Right cardiac atrium (tissue), 5 donors: ENCODE measurements at regions of chr16 and their contacts with region 1.

Region 1: DNA sequence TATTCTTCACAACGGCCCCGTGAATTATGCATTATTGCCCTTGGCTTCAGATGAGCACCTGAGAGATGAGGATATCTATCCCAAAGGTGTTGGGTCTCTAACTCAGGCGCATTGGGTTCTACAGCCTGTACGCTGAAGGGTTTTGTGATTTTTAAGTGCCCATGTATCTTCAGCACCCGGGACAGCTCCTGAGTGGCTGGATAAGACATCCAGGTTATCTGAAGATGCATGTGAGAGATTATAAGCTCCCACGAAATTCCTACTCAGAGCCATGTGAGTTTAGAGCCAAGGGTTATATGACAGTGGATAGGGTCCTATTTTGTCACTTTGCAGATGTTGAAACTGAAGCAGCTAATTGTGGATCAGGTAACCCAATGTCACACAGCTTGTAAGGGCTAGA is 612.3 kb upstream of the EEF2KMT start:
- DNase-seq: no peak
- ATAC-seq: no peak
- H3K4me3 ChIP-seq: no peak overlapping the region
- H3K27ac ChIP-seq: no peak overlapping the region
- H3K4me1 ChIP-seq: no peaks in the 10 kb centered on the region
- H3K27me3 ChIP-seq: no peaks in the 10 kb centered on the region

Region 2: GRCh38 chr16:5321930-5322329 is 388.0 kb before region 1 on chr16:
- intact Hi-C with region 1: no loop called
- DNase-seq: no peak
- ATAC-seq: no peak
- H3K4me3 ChIP-seq: no peak overlapping the region
- H3K27ac ChIP-seq: no peak overlapping the region
- H3K4me1 ChIP-seq: no peaks in the 10 kb centered on the region
- H3K27me3 ChIP-seq: no peaks in the 10 kb centered on the region

Region 3: DNA sequence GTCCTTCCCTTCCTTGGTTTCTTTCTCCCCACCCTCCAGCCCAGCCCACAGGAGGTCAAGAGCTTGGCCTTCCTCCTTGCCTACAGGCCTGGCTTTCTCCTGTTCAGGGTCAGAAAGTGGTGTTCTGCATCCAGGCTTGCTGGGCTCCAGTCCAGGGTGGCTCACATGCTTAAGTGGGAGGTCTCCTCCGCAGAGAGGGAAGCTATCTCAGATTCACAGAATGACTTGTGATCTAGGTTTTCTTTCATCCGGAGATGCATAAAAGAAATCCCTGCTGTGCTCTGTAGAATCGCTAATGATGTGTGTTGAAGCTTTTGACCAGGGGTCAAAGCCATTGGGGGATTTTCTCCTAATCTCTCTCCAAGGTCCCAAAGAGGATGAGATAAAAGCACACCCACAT is 230.0 kb before region 1 on chr16:
- intact Hi-C with region 1: no loop called
- DNase-seq: no peak
- ATAC-seq: no peak
- H3K4me3 ChIP-seq: no peak overlapping the region
- H3K27ac ChIP-seq: no peak overlapping the region
- H3K4me1 ChIP-seq: no peaks in the 10 kb centered on the region
- H3K27me3 ChIP-seq: no peaks in the 10 kb centered on the region

Region 4: DNA sequence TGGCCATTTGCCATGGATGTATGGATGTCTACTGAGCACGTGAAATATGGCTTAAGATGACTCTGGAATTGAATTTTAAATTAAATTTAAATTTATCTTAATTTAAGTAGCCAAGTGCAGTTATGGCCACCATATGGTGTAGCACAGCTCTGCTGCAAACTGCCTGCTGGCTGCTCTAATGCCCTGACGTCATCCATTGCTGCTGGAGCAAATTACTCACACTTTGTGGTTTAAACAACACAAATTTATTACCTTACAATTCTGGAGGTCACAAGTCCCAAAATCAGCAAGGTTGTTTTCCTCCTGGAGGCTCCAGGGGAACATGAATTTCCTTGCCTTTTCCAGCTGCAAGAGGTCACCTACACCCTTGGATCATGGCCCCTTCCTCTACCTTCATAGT is 67.0 kb after region 1 on chr16:
- intact Hi-C with region 1: loop called in 1 of 4 experiments (anchors 10 kb)
- DNase-seq: no peak
- ATAC-seq: no peak
- H3K4me3 ChIP-seq: no peak overlapping the region
- H3K27ac ChIP-seq: no peak overlapping the region
- H3K4me1 ChIP-seq: no peaks in the 10 kb centered on the region
- H3K27me3 ChIP-seq: no peaks in the 10 kb centered on the region

Region 5: DNA sequence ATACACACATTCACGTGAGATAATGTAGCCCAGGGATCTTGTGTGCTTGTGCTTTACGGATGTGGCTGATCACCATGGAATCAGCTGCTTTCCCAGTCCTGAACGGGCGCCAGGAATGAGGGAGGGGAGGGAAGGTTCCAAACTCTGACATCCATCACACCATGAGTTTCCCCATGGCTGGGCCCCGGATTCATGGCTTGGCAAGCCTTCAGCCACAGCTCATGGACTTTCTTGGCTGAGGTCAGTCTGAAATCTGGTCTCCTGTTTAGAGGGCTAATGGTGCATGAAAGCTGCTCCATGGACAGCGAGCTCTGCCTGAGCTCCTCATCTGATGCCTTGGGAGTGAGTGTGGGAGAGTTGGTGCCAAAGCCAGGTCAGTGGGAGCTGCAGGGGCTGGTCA is 155.3 kb after region 1 on chr16:
- intact Hi-C with region 1: no loop called
- DNase-seq: no peak
- ATAC-seq: no peak
- H3K4me3 ChIP-seq: no peak overlapping the region
- H3K27ac ChIP-seq: no peak overlapping the region
- H3K4me1 ChIP-seq: no peaks in the 10 kb centered on the region
- H3K27me3 ChIP-seq: no peaks in the 10 kb centered on the region